Heart right ventricle (tissue), 16 donors: ENCODE measurements at regions of chr2 and their contacts with region 1.

Region 1: GRCh38 chr2:168530982-168531622 is 75.0 kb downstream of the CERS6 start:
- DNase-seq: no peak
- ATAC-seq: peak in 3 of 8 donors; percentile 38 to 44 (median 42)
- H3K4me3 ChIP-seq: no peak overlapping the region
- H3K27ac ChIP-seq: peak overlapping the region; percentile 17 to 86 (median 80)
- H3K4me1 ChIP-seq: peaks cover 8 to 88% (median 44%) of the 10 kb centered on the region in 9 donors
- H3K27me3 ChIP-seq: no peaks in the 10 kb centered on the region
- CTCF ChIP-seq: no peak

Region 2: DNA sequence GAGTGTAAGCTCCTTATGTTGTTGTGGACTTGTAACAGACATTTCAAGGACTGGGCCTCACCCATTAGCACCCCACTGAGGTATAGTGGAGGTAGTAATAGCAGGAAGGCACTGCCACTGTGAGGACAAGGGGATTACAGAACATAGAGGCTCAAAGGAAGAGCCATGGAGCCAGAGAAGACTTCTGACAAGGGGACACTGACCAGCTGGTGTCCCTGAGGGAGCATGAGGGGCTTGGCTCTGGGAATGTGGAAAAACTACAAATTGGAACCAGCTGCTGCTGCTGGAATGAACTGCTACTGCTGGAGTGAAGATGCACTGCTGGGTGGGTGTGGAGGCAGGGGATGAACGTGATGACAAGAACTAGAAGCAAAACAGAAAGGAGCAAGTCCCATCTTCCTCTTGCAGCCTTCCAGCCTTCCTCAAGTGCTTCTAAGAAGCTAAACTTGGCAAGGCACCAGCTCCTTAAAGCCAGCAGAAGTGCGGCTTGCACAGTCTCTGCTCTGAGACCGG is 104.0 kb after region 1 on chr2:
- intact Hi-C with region 1: loop called in 5 of 10 experiments (anchors 5 to 10 kb)
- DNase-seq: peak; percentile 31 to 76
- ATAC-seq: peak; percentile 32 to 72 (median 54)
- H3K4me3 ChIP-seq: peak overlapping the region in 1 of 10 donors; percentile 7
- H3K27ac ChIP-seq: peak overlapping the region in 8 of 10 donors; percentile 11 to 87 (median 77)
- H3K4me1 ChIP-seq: peaks cover 9 to 76% (median 59%) of the 10 kb centered on the region in 9 donors
- H3K27me3 ChIP-seq: no peaks in the 10 kb centered on the region
- CTCF ChIP-seq: no peak

Region 3: GRCh38 chr2:168643979-168644378 is 112.9 kb after region 1 on chr2:
- intact Hi-C with region 1: loop called in 3 of 10 experiments (anchors 5 to 10 kb)
- DNase-seq: no peak
- ATAC-seq: peak in 7 of 8 donors; percentile 38 to 81 (median 66)
- H3K4me3 ChIP-seq: no peak overlapping the region
- H3K27ac ChIP-seq: peak overlapping the region in 9 of 10 donors; percentile 2 to 90 (median 63)
- H3K4me1 ChIP-seq: peaks cover 8 to 50% (median 28%) of the 10 kb centered on the region in 9 donors
- H3K27me3 ChIP-seq: no peaks in the 10 kb centered on the region
- CTCF ChIP-seq: no peak

Region 4: GRCh38 chr2:168801961-168802858 is 271.1 kb after region 1 on chr2 and contains the start of gene NOSTRIN:
- intact Hi-C with region 1: no loop called
- DNase-seq: peak in 1 of 2 donors; percentile 75
- ATAC-seq: peak; percentile 83 to 93 (median 90)
- H3K4me3 ChIP-seq: peak within 1 kb of the TSS; percentile 18 to 54 (median 42)
- H3K27ac ChIP-seq: peak within 1 kb of the TSS; percentile 8 to 85 (median 74)
- H3K4me1 ChIP-seq: peaks cover 0 to 71% (median 25%) of the 10 kb centered on the region in 9 donors
- H3K27me3 ChIP-seq: no peaks in the 10 kb centered on the region
- CTCF ChIP-seq: no peak
- total RNA-seq, gene NOSTRIN: 5.0 to 22.1 (median 12.2) TPM

Region 5: DNA sequence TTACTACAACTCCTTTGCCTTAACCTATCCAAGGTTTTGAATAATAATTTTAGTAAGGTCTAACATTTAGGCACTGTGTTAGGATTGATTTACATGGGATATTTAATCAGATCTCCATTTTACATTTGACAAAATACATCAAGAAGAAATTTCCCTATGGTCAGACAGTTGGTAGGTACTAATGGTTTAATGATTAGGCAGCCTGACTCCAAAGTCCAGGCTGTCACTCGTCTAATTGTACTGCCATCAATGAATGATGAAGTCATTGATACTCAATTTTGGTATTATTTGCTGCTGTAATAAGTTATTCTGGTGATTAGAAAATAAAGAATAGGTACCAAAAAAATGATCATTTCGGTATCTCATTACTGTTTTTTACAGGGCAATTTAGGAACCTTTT is 962.3 kb after region 1 on chr2:
- intact Hi-C with region 1: no loop called
- DNase-seq: no peak
- ATAC-seq: no peak
- H3K4me3 ChIP-seq: no peak overlapping the region
- H3K27ac ChIP-seq: no peak overlapping the region
- H3K4me1 ChIP-seq: no peaks in the 10 kb centered on the region
- H3K27me3 ChIP-seq: no peaks in the 10 kb centered on the region
- CTCF ChIP-seq: no peak